ENCODE measurements at regions of chr12 and their contacts with region 1.

Region 1: DNA sequence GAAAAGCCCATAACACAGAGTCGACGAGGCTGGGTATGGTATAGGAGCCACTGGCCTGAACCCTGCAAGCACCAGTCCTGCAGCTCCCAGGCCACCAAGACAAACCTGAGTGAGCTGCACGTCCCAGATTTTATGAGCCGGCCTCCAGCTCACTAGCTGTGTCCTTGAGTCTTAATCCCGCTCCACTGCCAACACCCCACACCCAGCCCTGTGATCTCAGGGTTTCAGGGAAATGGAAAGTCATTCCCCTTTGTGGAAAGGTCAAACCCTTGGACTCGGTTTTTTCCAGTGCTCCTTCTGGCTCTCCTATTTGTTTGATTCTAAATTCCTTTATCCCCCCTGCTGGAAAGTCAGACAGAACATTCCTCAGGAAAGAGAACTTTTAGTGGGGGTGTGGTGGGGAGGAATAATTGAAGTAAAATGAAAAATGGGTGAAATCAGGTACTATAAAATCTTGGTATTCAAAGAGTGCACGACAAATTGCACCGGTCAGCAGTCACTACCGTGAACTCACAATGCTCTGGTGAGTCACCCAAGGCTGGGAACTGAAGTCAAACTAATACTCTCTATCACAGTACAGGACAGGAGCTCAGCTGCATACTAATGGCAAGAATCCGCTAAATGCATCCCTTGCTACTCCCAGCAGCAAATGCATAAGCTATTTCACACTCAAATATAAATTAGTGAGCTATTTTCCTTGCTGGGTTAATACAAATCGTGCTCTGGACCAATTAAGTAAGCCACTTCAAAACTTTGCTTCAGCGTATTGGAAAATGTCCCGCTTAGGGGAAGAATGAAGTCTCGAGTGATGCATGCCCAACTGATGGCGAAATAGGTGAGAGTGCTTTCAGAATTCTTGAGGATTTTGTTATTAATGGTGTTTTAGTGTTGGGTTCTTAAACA is 9.0 kb downstream of the PITPNM2 start:
- DNase-seq: peak; percentile 77 to 85 (median 77)
- ATAC-seq: peak; percentile 86 to 94
- H3K4me3 ChIP-seq: no peak overlapping the region
- H3K27ac ChIP-seq: peak overlapping the region; percentile 77
- H3K4me1 ChIP-seq: peaks cover 21% of the 10 kb centered on the region
- H3K27me3 ChIP-seq: no peaks in the 10 kb centered on the region

Region 2: GRCh38 chr12:123089631-123090353 is 52.1 kb before region 1 on chr12:
- intact Hi-C with region 1: loop called in 1 of 4 experiments (anchors 10 kb)
- DNase-seq: no peak
- ATAC-seq: no peak
- H3K4me3 ChIP-seq: no peak overlapping the region
- H3K27ac ChIP-seq: no peak overlapping the region
- H3K4me1 ChIP-seq: peaks cover 37% of the 10 kb centered on the region
- H3K27me3 ChIP-seq: no peaks in the 10 kb centered on the region